ENCODE measurements at regions of chr12 and their contacts with region 1.

Region 1: GRCh38 chr12:48865434-48866290 is at the start of gene RND1:
- DNase-seq: peak; percentile 91 to 94
- H3K4me3 ChIP-seq: peak within 1 kb of the TSS; percentile 66 to 90 (median 76)
- H3K27ac ChIP-seq: peak within 1 kb of the TSS; percentile 82
- H3K4me1 ChIP-seq: peaks cover 7 to 26% (median 18%) of the 10 kb centered on the region in 4 experiments
- H3K27me3 ChIP-seq: no peaks in the 10 kb centered on the region
- CTCF ChIP-seq: peak in 1 of 3 experiments; percentile 16; a peak in 1 of 4 replicates
- EP300 ChIP-seq: no peak
- POLR2A ChIP-seq: peak; percentile 100
- RAD21 ChIP-seq: no peak
- total RNA-seq, gene RND1: 15.8 and 16.2 TPM in 2 replicates

Region 2: GRCh38 chr12:48814262-48815125 is 51.2 kb before region 1 on chr12:
- CTCF ChIA-PET with region 1: interaction called, 7 read pairs
- POLR2A ChIA-PET with region 1: interaction called, 18 read pairs
- DNase-seq: peak in 1 of 2 experiments; percentile 94
- H3K4me3 ChIP-seq: peak overlapping the region; percentile 59 to 94 (median 88)
- H3K27ac ChIP-seq: no peak overlapping the region
- H3K4me1 ChIP-seq: peaks cover 0 to 27% (median 19%) of the 10 kb centered on the region in 4 experiments; a peak in 6 of 7 replicates
- H3K27me3 ChIP-seq: peaks cover 17 to 46% (median 36%) of the 10 kb centered on the region in 4 experiments
- CTCF ChIP-seq: peak in 2 of 3 experiments; percentile 95 to 99; a peak in 3 of 4 replicates
- EP300 ChIP-seq: no peak; a peak in 1 of 3 replicates
- POLR2A ChIP-seq: no peak
- RAD21 ChIP-seq: peak in 1 of 2 experiments; percentile 48; a peak in 2 of 4 replicates

Region 3: GRCh38 chr12:48838048-48838447 is 27.6 kb before region 1 on chr12:
- CTCF ChIA-PET with region 1: no interaction called
- POLR2A ChIA-PET with region 1: interaction called, 10 read pairs
- DNase-seq: no peak
- H3K4me3 ChIP-seq: no peak overlapping the region
- H3K27ac ChIP-seq: no peak overlapping the region
- H3K4me1 ChIP-seq: no peaks in the 10 kb centered on the region
- H3K27me3 ChIP-seq: no peaks in the 10 kb centered on the region
- CTCF ChIP-seq: no peak
- EP300 ChIP-seq: no peak
- POLR2A ChIP-seq: no peak
- RAD21 ChIP-seq: no peak

Region 4: GRCh38 chr12:48924617-48925303 is 59.1 kb after region 1 on chr12:
- CTCF ChIA-PET with region 1: interaction called, 4 read pairs
- POLR2A ChIA-PET with region 1: interaction called, 21 read pairs
- DNase-seq: peak; percentile 29 to 79
- H3K4me3 ChIP-seq: peak overlapping the region; percentile 61 to 86 (median 70)
- H3K27ac ChIP-seq: peak overlapping the region; percentile 55
- H3K4me1 ChIP-seq: peaks cover 0 to 14% (median 4%) of the 10 kb centered on the region in 4 experiments; a peak in 4 of 7 replicates
- H3K27me3 ChIP-seq: no peaks in the 10 kb centered on the region; a peak in 1 of 7 replicates
- CTCF ChIP-seq: peak; percentile 64 to 71 (median 69)
- EP300 ChIP-seq: no peak
- POLR2A ChIP-seq: peak; percentile 27 to 44; a peak in 2 of 3 replicates
- RAD21 ChIP-seq: peak; percentile 46 to 61

Region 5: GRCh38 chr12:48957141-48958048 is 91.7 kb after region 1 on chr12 and contains the start of gene ARF3:
- CTCF ChIA-PET with region 1: interaction called, 3 read pairs
- POLR2A ChIA-PET with region 1: interaction called, 13 read pairs
- DNase-seq: peak; percentile 82 to 96
- H3K4me3 ChIP-seq: peak within 1 kb of the TSS; percentile 93 to 97 (median 94)
- H3K27ac ChIP-seq: peak within 1 kb of the TSS; percentile 86
- H3K4me1 ChIP-seq: peaks cover 5 to 14% (median 8%) of the 10 kb centered on the region in 4 experiments; a peak in 6 of 7 replicates
- H3K27me3 ChIP-seq: no peaks in the 10 kb centered on the region
- CTCF ChIP-seq: no peak
- EP300 ChIP-seq: peak in 1 of 2 experiments; percentile 58; a peak in 1 of 3 replicates
- POLR2A ChIP-seq: peak; percentile 56 to 60; a peak in 2 of 3 replicates
- RAD21 ChIP-seq: no peak
- total RNA-seq, gene ARF3: 250 and 251 TPM in 2 replicates